T-cell (primary cell): ENCODE measurements at regions of chr22 and their contacts with region 1.

Region 1: DNA sequence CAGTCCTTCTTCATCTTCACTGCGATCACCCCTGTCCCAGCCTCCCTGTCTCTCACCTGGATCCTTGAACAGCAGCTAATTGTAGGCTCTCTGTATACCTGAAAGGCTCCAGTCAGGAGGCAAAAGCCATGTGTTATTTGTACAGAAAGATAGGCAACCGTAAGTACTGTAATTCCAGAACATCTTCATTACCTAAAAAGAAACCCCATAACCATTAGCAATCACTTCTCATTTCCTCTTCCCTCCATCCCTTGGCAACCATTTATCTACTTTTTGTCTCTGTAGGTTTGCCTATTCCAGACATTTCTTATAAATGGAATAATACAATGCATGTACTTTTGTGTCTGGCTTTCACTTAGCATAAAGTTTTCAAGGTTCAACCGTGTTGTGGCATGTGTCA is 17.8 kb downstream of the NAGA start:
- DNase-seq: no peak
- ATAC-seq: no peak
- H3K4me3 ChIP-seq: no peak overlapping the region
- H3K4me3 Mint-ChIP-seq: no peak overlapping the region
- H3K27ac ChIP-seq: no peak overlapping the region
- H3K27ac Mint-ChIP-seq: no peak overlapping the region
- H3K4me1 ChIP-seq: no peaks in the 10 kb centered on the region
- H3K4me1 Mint-ChIP-seq: no peaks in the 10 kb centered on the region
- H3K27me3 ChIP-seq: no peaks in the 10 kb centered on the region
- H3K27me3 Mint-ChIP-seq: no peaks in the 10 kb centered on the region

Region 2: GRCh38 chr22:41919357-41920224 is 133.2 kb before region 1 on chr22:
- CTCF ChIA-PET with region 1: no interaction called
- POLR2A ChIA-PET with region 1: no interaction called
- DNase-seq: peak in 7 of 35 experiments; percentile 22 to 51 (median 33)
- ATAC-seq: peak; percentile 46 to 66 (median 52)
- H3K4me3 ChIP-seq: peak overlapping the region; percentile 48 to 68
- H3K4me3 Mint-ChIP-seq: peak overlapping the region; percentile 66 to 75 (median 67)
- H3K27ac ChIP-seq: peak overlapping the region; percentile 7
- H3K27ac Mint-ChIP-seq: peak overlapping the region in 1 of 2 donors; percentile 48
- H3K4me1 ChIP-seq: peaks cover 5 to 40% of the 10 kb centered on the region in 2 experiments
- H3K4me1 Mint-ChIP-seq: peaks cover 20 to 29% (median 23%) of the 10 kb centered on the region in 3 donors
- H3K27me3 ChIP-seq: peaks cover 10 to 47% of the 10 kb centered on the region in 2 experiments
- H3K27me3 Mint-ChIP-seq: peaks cover 4 to 17% of the 10 kb centered on the region in 2 donors

Region 3: DNA sequence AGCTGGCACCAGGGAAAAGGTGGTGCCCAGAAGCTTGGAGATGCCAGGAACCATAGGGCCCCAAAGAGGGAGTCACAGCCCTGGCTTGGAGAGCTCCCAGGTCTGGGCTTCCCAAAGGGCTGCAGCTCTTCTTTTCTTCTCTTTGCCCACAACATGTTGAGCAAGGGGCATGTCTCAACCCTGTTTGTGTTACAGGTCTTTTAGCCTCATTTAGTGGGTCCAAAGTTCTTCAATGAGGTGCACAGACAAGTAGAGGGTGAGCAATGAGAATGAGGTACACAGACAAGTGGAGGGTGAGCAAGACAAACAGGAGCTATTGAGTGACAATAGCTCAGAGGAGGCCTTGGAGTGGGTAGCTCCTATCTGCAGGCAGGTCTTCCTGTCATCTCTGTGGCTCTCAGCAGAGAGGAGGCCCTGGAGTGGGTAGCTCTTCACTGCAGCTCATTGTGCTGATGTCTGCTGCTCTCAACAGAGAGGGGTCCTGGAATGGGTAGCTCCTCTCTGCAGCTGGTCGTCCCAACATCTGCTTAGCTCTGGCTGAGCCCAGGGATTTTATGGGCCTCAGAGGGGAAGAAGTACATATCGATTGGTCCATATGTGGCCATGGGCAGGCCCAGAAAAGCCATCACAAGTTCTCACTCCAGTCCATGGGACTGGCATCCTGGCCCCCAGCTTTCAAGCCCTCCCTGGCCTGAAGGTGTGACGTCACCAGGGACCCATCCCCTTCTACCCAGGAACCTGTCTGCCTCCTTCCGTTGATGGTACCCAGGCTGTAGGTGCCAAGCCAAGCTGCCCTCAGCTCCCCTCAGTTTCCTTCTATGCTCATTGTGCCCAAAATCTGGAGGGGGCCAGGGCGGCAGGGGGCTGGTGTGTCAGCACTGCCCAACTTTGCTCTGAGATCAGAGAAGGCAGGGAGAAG is 19.2 kb before region 1 on chr22:
- CTCF ChIA-PET with region 1: no interaction called
- POLR2A ChIA-PET with region 1: no interaction called
- DNase-seq: no peak
- ATAC-seq: no peak
- H3K4me3 ChIP-seq: no peak overlapping the region
- H3K4me3 Mint-ChIP-seq: no peak overlapping the region
- H3K27ac ChIP-seq: no peak overlapping the region
- H3K27ac Mint-ChIP-seq: no peak overlapping the region
- H3K4me1 ChIP-seq: peaks cover 0 to 8% of the 10 kb centered on the region in 2 experiments
- H3K4me1 Mint-ChIP-seq: peaks cover 0 to 10% (median 5%) of the 10 kb centered on the region in 3 donors
- H3K27me3 ChIP-seq: no peaks in the 10 kb centered on the region
- H3K27me3 Mint-ChIP-seq: no peaks in the 10 kb centered on the region

Region 4: DNA sequence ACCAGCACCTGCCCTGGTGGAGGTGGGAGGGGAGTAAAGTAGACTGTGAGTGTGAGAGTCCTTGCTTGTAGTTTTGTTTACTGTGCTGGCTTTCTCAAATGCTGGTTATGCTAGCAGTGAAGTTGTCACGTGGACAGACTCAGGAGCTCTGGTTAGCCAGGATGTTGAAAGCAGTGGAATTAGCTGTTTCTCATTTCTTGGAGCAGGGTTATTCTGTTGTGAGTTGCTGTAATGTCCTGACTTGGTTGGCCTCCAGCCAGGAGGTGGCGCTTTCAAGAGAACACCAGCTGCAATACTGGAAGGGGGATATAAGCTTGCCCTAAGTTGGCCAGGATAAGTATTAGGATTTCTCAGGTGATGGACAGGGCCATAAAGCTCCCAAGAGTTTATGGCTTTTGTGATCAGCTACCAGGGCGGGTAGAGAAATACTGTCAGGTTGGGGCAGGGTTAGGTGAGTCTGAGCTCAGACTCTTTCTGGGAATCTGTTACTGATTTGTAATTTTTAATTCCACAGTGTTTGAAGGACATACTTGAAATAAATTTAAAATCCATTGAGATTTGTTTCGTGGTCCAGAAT is 64.2 kb after region 1 on chr22:
- CTCF ChIA-PET with region 1: interaction called in 1 of 2 experiments, 10 read pairs
- POLR2A ChIA-PET with region 1: no interaction called
- DNase-seq: no peak
- ATAC-seq: no peak
- H3K4me3 ChIP-seq: no peak overlapping the region
- H3K4me3 Mint-ChIP-seq: no peak overlapping the region
- H3K27ac ChIP-seq: no peak overlapping the region
- H3K27ac Mint-ChIP-seq: no peak overlapping the region
- H3K4me1 ChIP-seq: peaks cover 19 to 26% of the 10 kb centered on the region in 2 experiments
- H3K4me1 Mint-ChIP-seq: peaks cover 33 to 38% (median 34%) of the 10 kb centered on the region in 3 donors
- H3K27me3 ChIP-seq: no peaks in the 10 kb centered on the region
- H3K27me3 Mint-ChIP-seq: no peaks in the 10 kb centered on the region